Prostate gland (tissue), 2 donors: ENCODE measurements at regions of chr5 and their contacts with region 1.

Region 1: GRCh38 chr5:150000256-150000989 is at the starts of genes HMGXB3 and TIGD6:
- DNase-seq: peak; percentile 84
- H3K4me3 ChIP-seq: peak within 1 kb of the TSS; percentile 91 to 98
- H3K27ac ChIP-seq: peak within 1 kb of the TSS; percentile 93 to 95
- H3K4me1 ChIP-seq: peaks cover 23% of the 10 kb centered on the region
- H3K27me3 ChIP-seq: no peaks in the 10 kb centered on the region
- CTCF ChIP-seq: peak in 3 of 4 experiments; percentile 12 to 37 (median 15)
- POLR2A ChIP-seq: peak; percentile 69
- total RNA-seq, gene HMGXB3: 49.6 to 64.2 TPM
- total RNA-seq, gene TIGD6: 4.7 to 11.7 TPM

Region 2: GRCh38 chr5:149551200-149552037 is 449.0 kb before region 1 on chr5 and contains the start of gene CSNK1A1:
- intact Hi-C with region 1: no loop called
- DNase-seq: peak; percentile 97
- H3K4me3 ChIP-seq: peak within 1 kb of the TSS; percentile 87 to 94
- H3K27ac ChIP-seq: peak within 1 kb of the TSS; percentile 99
- H3K4me1 ChIP-seq: no peaks in the 10 kb centered on the region
- H3K27me3 ChIP-seq: no peaks in the 10 kb centered on the region
- CTCF ChIP-seq: peak; percentile 53 to 94 (median 80)
- POLR2A ChIP-seq: peak; percentile 94
- total RNA-seq, gene CSNK1A1: 219 to 269 TPM

Region 3: DNA sequence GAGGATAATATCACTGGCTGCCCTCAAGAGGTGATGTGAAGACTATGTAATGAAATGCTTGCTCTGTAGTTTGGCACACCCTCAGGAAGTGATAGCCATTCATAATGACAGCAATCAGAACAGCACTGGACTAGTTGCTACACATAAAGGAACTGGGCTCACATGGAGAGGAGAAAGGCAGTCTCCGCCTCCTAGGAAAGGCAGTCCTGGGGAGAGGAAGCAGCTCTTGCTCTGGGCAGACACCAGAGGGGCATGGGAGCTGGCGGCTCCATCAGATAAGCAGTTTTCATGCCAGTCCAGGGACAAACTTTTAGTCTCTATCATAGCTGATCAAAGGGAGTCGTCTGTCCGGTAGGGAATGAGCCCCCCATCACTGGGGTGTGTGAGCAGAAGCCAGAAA is 372.2 kb before region 1 on chr5:
- intact Hi-C with region 1: no loop called
- DNase-seq: no peak
- H3K4me3 ChIP-seq: no peak overlapping the region
- H3K27ac ChIP-seq: no peak overlapping the region
- H3K4me1 ChIP-seq: no peaks in the 10 kb centered on the region
- H3K27me3 ChIP-seq: no peaks in the 10 kb centered on the region
- CTCF ChIP-seq: no peak
- POLR2A ChIP-seq: no peak

Region 4: DNA sequence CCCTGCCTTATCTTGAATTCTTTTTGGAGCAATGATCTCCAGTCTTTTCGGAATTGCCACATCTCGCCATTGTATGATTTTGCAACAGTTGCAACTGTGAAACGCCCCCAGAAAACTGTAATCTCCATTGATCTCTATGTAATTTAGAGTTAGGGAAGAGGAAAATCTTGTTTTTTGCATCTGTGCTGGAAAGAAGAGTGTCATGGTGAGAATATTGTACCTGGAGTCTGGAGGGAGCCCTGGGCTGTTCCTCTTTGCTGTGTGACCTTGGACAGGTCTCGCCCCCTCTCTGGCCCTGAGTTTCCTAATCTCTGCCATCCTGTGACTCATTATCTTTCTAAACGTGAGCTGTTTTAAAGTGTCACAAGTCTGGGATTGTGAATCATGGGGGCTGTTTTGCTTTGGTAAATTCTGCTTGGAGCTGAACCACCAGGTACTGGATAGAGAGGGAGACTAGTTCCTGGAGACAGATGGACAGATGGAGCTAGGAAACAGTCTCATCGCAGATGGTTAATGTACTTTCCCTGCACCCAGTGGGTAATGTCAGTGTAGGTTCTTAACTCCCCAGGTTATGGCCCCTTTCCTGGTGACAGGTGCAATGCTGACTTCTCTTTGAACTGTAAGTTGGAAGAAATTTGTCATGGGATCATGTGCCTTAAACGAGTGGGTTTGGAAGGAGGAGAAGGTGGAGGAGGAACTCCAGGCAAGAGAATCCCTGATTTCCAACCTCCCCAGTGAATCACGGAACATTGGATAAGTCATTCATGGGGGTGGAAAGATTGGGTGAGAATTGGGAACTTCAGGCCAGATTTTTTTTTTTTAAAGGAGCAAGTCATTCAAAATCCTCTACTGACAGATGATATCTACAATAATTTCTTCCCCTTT is 250.7 kb before region 1 on chr5:
- intact Hi-C with region 1: no loop called
- DNase-seq: no peak
- H3K4me3 ChIP-seq: no peak overlapping the region
- H3K27ac ChIP-seq: no peak overlapping the region
- H3K4me1 ChIP-seq: no peaks in the 10 kb centered on the region
- H3K27me3 ChIP-seq: no peaks in the 10 kb centered on the region
- CTCF ChIP-seq: no peak
- POLR2A ChIP-seq: no peak

Region 5: DNA sequence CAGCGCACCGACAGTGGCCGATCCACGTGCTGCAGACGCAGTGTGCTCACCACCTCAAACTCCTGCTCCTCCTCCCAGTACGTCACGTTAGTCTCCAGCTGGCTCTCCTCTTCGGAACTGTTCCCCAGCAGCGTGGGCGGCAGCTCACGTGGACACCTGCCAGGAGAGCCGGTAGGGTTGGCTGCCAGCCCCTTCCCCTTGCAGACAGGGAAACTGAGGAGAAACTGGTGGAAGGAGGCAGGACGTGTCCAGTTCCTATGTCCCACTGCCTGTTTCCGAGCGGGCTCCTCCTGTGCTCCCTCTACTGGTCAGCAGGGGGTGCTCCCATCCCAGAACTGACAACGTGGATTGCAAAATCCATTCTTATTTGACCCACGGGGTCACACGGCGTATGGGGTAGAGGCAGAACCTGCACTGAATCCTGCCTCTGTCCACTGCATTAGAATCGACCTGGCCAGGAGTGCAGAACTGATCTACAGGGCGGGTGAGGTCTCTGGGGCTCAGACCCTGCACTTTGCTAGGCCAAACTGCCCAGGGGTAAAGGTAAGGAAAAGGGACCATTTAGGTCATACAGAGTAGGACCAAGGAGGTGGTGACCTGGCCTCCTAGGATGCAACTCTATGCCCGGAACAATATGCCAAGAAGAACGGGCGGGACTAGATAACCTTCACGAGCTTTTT is 129.5 kb after region 1 on chr5:
- intact Hi-C with region 1: loop called (anchors 10 kb)
- DNase-seq: peak; percentile 47
- H3K4me3 ChIP-seq: no peak overlapping the region
- H3K27ac ChIP-seq: no peak overlapping the region
- H3K4me1 ChIP-seq: no peaks in the 10 kb centered on the region
- H3K27me3 ChIP-seq: no peaks in the 10 kb centered on the region
- CTCF ChIP-seq: peak; percentile 76 to 91 (median 90)
- POLR2A ChIP-seq: no peak